ENCODE measurements at regions of chr2 and their contacts with region 1.

Region 1: DNA sequence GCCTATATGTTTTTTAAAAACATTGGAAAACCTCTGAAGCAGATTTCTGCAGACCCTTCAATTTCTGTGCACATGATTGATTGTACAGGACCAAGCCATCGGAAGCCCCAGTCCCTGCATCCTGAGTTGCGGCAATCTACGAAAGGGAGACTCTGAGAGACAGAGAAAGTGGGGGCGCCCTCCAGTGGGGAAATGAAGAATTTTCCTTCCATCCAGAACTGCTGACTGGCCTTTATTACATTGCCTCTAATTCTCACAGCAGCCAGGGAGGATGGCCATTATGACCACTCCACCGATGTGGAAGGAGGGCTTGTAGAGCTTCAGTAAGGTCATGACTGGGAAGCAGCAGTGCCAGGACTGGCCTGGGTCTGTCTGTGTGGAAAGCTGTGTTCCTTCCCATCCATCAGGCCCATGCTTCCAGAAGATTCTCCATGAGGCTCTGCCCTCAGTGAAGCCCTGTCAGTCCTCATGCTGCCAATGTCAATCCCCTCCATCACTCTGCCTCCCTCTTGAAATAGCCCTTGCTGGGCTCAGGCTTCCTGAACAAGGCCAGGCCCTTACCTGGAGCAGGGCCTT is 20.0 kb upstream of the RESP18 start:
- DNase-seq: peak; percentile 86
- H3K4me3 Mint-ChIP-seq: no peak overlapping the region
- H3K27ac Mint-ChIP-seq: no peak overlapping the region
- H3K4me1 Mint-ChIP-seq: no peaks in the 10 kb centered on the region
- H3K27me3 Mint-ChIP-seq: peaks cover 34% of the 10 kb centered on the region

Region 2: GRCh38 chr2:219160186-219161017 is 192.1 kb before region 1 on chr2 and contains the start of gene NHEJ1:
- CTCF ChIA-PET with region 1: interaction called, 3 read pairs
- intact Hi-C with region 1: loop called (anchors 1 kb)
- DNase-seq: peak; percentile 96
- H3K4me3 Mint-ChIP-seq: peak within 1 kb of the TSS; percentile 80
- H3K27ac Mint-ChIP-seq: peak within 1 kb of the TSS; percentile 88
- H3K4me1 Mint-ChIP-seq: peaks cover 13% of the 10 kb centered on the region
- H3K27me3 Mint-ChIP-seq: no peaks in the 10 kb centered on the region
- total RNA-seq, gene NHEJ1: 24.4 to 26.6 TPM

Region 3: GRCh38 chr2:219362524-219363164 is 10.1 kb after region 1 on chr2:
- CTCF ChIA-PET with region 1: interaction called, 11 read pairs
- intact Hi-C with region 1: no loop called
- DNase-seq: no peak
- H3K4me3 Mint-ChIP-seq: no peak overlapping the region
- H3K27ac Mint-ChIP-seq: no peak overlapping the region
- H3K4me1 Mint-ChIP-seq: peaks cover 3% of the 10 kb centered on the region
- H3K27me3 Mint-ChIP-seq: peaks cover 13% of the 10 kb centered on the region

Region 4: GRCh38 chr2:219441451-219442255 is 89.1 kb after region 1 on chr2:
- CTCF ChIA-PET with region 1: no interaction called
- intact Hi-C with region 1: no loop called
- DNase-seq: peak; percentile 65
- H3K4me3 Mint-ChIP-seq: peak overlapping the region; percentile 65
- H3K27ac Mint-ChIP-seq: no peak overlapping the region
- H3K4me1 Mint-ChIP-seq: peaks cover 12% of the 10 kb centered on the region
- H3K27me3 Mint-ChIP-seq: peaks cover 6% of the 10 kb centered on the region

Region 5: DNA sequence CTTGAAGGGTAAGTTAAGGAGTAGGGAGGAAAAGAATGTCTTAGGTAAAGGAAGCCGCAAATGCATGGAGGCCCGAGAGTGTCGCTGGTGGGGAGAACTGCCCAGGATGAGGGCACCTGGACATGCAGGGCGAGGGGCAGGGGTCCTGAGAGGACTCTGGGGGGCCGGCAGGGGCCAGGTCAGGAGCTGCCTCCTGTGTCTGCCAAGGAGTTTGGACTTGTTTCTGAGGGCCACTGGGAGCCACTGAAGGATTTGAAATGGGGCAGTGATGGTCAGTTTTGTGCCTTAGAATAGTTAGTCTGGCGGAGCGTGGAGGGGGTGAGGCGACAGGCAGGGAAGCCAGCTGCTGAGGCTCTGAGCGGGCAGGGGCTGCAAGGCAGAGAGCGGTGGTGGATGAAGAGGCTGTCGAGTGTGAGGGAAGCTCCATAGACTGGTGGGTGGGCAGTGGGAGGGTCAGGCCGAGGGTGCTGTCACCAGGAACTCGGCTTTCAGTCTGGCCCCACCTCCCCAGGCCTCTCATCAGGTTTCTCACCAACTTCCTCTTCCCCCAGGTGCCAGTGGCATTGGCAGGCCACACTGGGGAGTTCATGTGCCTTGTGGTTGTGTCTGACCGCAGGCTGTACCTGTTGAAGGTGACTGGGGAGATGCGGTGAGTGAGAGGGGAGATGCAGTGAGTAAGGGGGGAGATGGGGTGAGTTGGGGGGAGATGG is 260.2 kb after region 1 on chr2:
- CTCF ChIA-PET with region 1: no interaction called
- intact Hi-C with region 1: no loop called
- DNase-seq: peak; percentile 25
- H3K4me3 Mint-ChIP-seq: no peak overlapping the region
- H3K27ac Mint-ChIP-seq: no peak overlapping the region
- H3K4me1 Mint-ChIP-seq: peaks cover 10% of the 10 kb centered on the region
- H3K27me3 Mint-ChIP-seq: no peaks in the 10 kb centered on the region

Measured in activated naive CD4-positive, alpha-beta T cell treated with anti-CD3 and anti-CD28 coated beads for 36 hours (primary cell).